Left colon (tissue), 2 donors: ENCODE measurements at regions of chr7 and their contacts with region 1.

Region 1: GRCh38 chr7:92567460-92567859 is 22.7 kb downstream of the FAM133B start:
- DNase-seq: no peak
- ATAC-seq: no peak

Region 2: GRCh38 chr7:92504563-92504962 is 62.9 kb before region 1 on chr7:
- intact Hi-C with region 1: loop called in 1 of 2 experiments (anchors 10 kb)
- DNase-seq: no peak
- ATAC-seq: no peak